Endothelial cell of umbilical vein (primary cell): ENCODE measurements at regions of chr11 and their contacts with region 1.

Region 1: GRCh38 chr11:117843666-117844484 is 19.3 kb upstream of the FXYD2 start:
- DNase-seq: peak; percentile 69
- H3K4me3 ChIP-seq: no peak overlapping the region
- H3K27ac ChIP-seq: no peak overlapping the region
- H3K4me1 ChIP-seq: no peaks in the 10 kb centered on the region
- H3K27me3 ChIP-seq: peaks cover 0 to 2% of the 10 kb centered on the region in 2 experiments
- CTCF ChIP-seq: peak; percentile 92 to 95
- POLR2A ChIP-seq: no peak

Region 2: DNA sequence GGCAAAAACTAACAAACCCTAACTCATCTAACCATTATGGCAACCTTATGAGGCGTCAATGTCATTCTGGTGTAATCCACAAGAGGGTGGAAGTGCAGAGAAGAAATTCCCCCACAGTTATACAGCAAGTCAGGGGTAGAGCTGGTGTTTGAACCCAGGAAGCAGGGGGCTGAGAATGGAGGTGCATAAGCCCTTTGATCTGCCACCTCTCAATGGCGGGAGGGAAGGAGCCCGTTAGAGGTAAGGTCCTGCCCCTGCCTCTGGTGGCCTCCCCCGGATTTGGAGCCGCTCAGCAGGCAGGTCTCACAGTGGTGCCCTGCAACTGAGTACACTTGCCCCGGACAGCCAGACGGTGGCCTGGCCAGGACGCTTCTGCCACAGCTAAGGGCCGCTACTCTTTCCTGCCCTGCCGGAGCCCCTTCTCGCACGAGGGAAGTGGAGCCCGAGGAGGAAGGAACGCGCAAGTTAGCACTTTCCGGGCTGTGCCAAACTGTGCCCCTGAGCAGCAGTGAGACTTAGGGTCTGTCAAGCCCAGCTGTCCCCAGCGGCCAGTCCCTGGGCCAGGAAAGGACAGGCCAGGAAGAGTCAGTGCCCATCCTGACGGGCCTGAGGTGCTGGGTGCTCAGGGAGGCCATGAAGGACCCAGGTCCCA is 20.5 kb before region 1 on chr11:
- CTCF ChIA-PET with region 1: interaction called, 16 read pairs
- POLR2A ChIA-PET with region 1: no interaction called
- dilution Hi-C with region 1: no loop called
- intact Hi-C with region 1: loop called (anchors 1 kb)
- DNase-seq: peak; percentile 41
- H3K4me3 ChIP-seq: no peak overlapping the region
- H3K27ac ChIP-seq: peak overlapping the region; percentile 94
- H3K4me1 ChIP-seq: peaks cover 32% of the 10 kb centered on the region
- H3K27me3 ChIP-seq: no peaks in the 10 kb centered on the region
- CTCF ChIP-seq: peak; percentile 12 to 35
- POLR2A ChIP-seq: no peak

Region 3: DNA sequence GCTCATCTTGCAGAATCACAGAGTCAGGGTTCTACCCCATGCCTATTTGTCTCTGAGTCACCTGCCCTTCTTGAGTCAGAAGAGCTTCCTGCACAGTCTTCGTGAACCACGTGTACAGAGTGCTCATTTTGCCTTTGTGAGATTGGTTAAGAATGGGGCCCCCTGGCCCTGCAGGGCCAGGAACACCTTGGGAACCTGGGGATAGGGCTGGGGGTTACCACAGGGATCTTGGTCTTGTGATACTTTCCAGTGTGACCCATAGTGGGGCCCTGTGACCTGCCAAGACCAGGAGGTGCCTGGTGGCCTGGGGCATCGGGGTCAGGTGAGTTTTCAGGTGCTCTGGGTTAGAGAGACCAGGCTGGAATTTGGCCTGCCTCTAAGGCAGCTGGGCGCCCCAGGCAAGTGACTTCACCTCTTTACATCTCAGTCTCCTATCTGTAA is 75.9 kb after region 1 on chr11:
- CTCF ChIA-PET with region 1: no interaction called
- POLR2A ChIA-PET with region 1: no interaction called
- dilution Hi-C with region 1: no loop called
- intact Hi-C with region 1: no loop called
- DNase-seq: no peak
- H3K4me3 ChIP-seq: no peak overlapping the region
- H3K27ac ChIP-seq: no peak overlapping the region
- H3K4me1 ChIP-seq: no peaks in the 10 kb centered on the region
- H3K27me3 ChIP-seq: no peaks in the 10 kb centered on the region
- CTCF ChIP-seq: no peak
- POLR2A ChIP-seq: no peak

Region 4: DNA sequence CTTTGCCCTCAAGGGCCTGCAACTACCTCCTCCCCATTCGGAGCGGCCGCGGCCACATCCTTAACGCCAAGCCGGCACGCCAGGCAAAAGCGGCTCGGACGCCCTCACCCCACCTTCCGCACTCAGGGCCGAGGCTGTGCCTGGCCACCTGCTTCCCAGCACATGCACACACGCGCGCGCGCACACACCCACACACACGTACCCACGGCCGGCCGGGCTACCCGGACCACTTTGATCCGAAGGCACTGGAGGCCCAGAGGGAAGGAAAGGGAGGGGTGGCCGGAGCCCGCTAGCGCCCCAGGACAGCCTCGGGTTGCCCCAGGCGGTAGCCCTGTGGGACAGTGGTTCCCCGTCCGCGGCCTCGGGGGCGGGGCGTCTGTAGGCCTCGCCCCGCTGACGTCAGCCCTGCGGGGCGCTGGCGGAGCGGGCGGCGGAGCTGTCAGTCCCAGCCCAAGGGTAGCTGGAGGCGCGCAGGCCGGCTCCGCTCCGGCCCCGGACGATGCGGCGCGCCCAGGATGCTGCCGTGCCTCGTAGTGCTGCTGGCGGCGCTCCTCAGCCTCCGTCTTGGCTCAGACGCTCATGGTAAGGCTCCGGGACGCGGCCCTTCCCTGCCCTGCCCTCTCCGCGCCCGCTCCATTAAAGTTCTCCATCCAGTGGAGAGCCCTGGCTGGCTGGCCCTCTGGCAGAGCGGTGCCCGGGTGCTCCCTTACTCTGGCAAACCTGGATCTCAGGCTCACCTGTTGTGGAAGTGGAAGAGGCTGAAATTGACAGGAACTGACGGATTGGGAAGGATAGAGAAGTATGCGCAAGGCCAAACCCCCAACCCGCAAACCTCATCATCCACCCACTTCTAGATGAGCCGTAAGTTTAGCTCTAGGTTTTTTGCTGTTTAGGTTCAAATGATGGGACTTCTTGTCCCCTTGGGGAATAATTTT is 142.3 kb after region 1 on chr11 and contains the start of gene IL10RA:
- CTCF ChIA-PET with region 1: no interaction called
- POLR2A ChIA-PET with region 1: no interaction called
- dilution Hi-C with region 1: no loop called
- intact Hi-C with region 1: loop called (anchors 1 kb)
- DNase-seq: peak; percentile 78
- H3K4me3 ChIP-seq: peak within 1 kb of the TSS in 2 of 3 experiments; percentile 37 to 49
- H3K27ac ChIP-seq: no peak within 1 kb of the TSS
- H3K4me1 ChIP-seq: peaks cover 4% of the 10 kb centered on the region
- H3K27me3 ChIP-seq: peaks cover 12 to 17% of the 10 kb centered on the region in 2 experiments
- CTCF ChIP-seq: no peak
- POLR2A ChIP-seq: no peak
- total RNA-seq, gene IL10RA: 0.14 TPM in 1 of 2 replicates, not detected in the other